ENCODE measurements at regions of chr22 and their contacts with region 1.

Region 1: DNA sequence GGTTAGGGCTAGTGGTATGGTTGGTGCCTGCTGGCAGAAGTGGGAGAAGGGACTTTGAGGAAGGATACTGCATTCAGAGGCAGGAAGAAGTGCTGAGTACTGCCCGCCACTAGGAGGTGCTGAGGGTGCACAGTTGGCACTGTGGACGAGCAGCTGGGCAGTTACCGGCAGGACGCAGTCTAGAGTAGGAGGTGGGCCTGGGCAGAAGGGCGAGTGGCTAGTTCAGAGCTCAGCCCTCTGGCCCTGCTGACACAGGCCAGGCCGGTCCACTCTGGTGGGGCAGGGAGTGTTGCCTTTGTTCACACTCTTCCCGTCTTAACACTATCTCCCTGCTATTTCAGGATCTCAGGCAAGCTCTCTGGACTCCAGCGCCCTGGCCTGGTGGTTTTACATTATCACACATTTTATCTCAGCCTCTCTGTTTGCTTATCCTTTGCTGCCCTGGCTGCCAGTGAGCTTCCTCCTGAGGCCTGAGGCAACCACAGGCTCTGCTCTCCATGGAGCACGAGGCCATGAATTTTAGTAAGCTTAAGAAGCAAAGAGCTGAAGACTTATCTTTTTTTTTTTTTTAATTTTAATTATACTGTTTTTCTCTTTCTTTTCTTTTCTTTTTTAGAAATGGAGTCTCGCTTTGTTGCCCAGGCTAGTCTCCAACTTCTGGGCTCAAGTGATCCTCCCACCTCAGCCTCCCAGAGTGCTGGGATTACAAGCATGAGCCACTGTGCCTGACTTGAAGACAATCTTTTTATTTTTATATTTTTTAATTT is 26.9 kb downstream of the SNAP29 start:
- DNase-seq: peak; percentile 82
- ATAC-seq: peak; percentile 99
- H3K4me3 ChIP-seq: no peak overlapping the region
- H3K27ac ChIP-seq: peak overlapping the region; percentile 41
- H3K4me1 ChIP-seq: peaks cover 5% of the 10 kb centered on the region
- H3K27me3 ChIP-seq: no peaks in the 10 kb centered on the region
- CTCF ChIP-seq: peak; percentile 96
- POLR2A ChIP-seq: no peak; the same call in 1 of the 2 replicates
- RAD21 ChIP-seq: peak; percentile 96

Region 2: DNA sequence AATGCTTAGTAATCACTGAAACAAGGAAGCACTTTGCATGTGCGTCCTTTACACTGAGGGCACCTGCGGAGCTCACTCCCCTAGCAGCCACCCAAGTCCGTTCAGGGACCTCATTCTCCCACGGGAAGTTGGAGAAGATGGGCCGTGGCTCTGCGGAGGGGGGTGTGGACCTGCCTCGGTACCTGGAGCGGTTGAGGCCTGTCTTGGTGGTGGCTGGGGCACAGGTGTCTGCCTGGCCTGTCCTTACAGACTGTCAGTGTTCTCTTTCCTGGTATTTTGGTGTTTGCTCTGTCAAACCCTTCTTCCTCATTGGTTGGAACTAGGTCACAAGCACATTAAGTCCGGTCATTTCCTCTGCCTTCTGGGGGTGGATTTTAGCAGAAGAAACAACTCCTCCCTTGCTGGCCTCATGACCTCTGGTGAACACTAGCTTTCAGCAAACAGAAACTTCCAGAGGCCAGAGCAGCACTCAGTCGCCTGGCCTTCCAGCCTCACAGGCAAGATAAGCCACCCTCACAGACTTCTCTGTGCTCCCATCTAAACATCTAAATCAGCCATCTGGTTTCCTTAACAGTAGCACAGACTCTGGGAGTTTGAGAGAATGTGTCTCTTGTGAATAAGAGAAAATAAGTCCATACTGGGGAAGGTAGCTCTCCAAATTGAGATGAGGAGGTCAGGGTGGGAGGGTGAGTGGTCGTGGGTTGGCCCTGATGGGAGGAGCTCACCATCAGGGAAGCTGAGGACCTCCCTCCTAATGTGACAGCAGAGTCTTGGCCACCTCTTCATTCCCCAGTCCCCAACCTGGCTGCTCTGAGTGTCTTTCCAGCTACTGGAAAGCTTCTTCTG is 18.3 kb before region 1 on chr22:
- CTCF ChIA-PET with region 1: interaction called, 14 read pairs
- POLR2A ChIA-PET with region 1: no interaction called
- dilution Hi-C with region 1: no loop called
- in situ Hi-C with region 1: no loop called
- intact Hi-C with region 1: no loop called
- DNase-seq: peak; percentile 46
- ATAC-seq: peak; percentile 76
- H3K4me3 ChIP-seq: no peak overlapping the region
- H3K27ac ChIP-seq: peak overlapping the region; percentile 88; the same call in 1 of the 2 replicates
- H3K4me1 ChIP-seq: peaks cover 25% of the 10 kb centered on the region
- H3K27me3 ChIP-seq: no peaks in the 10 kb centered on the region
- CTCF ChIP-seq: no peak
- POLR2A ChIP-seq: no peak
- RAD21 ChIP-seq: no peak

Region 3: GRCh38 chr22:20916983-20917810 is 31.5 kb after region 1 on chr22 and contains the start of gene CRKL:
- CTCF ChIA-PET with region 1: interaction called, 7 read pairs
- POLR2A ChIA-PET with region 1: no interaction called
- dilution Hi-C with region 1: no loop called
- in situ Hi-C with region 1: no loop called
- intact Hi-C with region 1: loop called (anchors 2 kb)
- DNase-seq: peak; percentile 97
- ATAC-seq: peak; percentile 99
- H3K4me3 ChIP-seq: peak within 1 kb of the TSS; percentile 87
- H3K27ac ChIP-seq: peak within 1 kb of the TSS; percentile 93
- H3K4me1 ChIP-seq: 0 out of 2 replicates have a peak, but pooled peaks cover 6% of the 10 kb centered on the region
- H3K27me3 ChIP-seq: no peaks in the 10 kb centered on the region
- CTCF ChIP-seq: peak; percentile 98
- POLR2A ChIP-seq: no peak
- RAD21 ChIP-seq: peak; percentile 62
- total RNA-seq, gene CRKL: 35.5 and 35.8 TPM in 2 replicates

Region 4: GRCh38 chr22:20957316-20958101 is 71.8 kb after region 1 on chr22:
- CTCF ChIA-PET with region 1: interaction called, 5 read pairs
- POLR2A ChIA-PET with region 1: no interaction called
- dilution Hi-C with region 1: no loop called
- in situ Hi-C with region 1: no loop called
- intact Hi-C with region 1: loop called (anchors 10 kb)
- DNase-seq: no peak
- ATAC-seq: peak; percentile 50
- H3K4me3 ChIP-seq: peak overlapping the region; percentile 51
- H3K27ac ChIP-seq: no peak overlapping the region; the same call in 1 of the 2 replicates
- H3K4me1 ChIP-seq: peaks cover 6% of the 10 kb centered on the region; the same call in 1 of the 2 replicates
- H3K27me3 ChIP-seq: no peaks in the 10 kb centered on the region
- CTCF ChIP-seq: no peak
- POLR2A ChIP-seq: no peak
- RAD21 ChIP-seq: no peak

Region 5: GRCh38 chr22:20981787-20982562 is 96.2 kb after region 1 on chr22 and contains the start of gene LZTR1:
- CTCF ChIA-PET with region 1: no interaction called
- POLR2A ChIA-PET with region 1: no interaction called
- dilution Hi-C with region 1: no loop called
- in situ Hi-C with region 1: no loop called
- intact Hi-C with region 1: loop called (anchors 2 kb)
- DNase-seq: peak; percentile 82
- ATAC-seq: peak; percentile 95
- H3K4me3 ChIP-seq: peak within 1 kb of the TSS; percentile 87
- H3K27ac ChIP-seq: peak within 1 kb of the TSS; percentile 91
- H3K4me1 ChIP-seq: peaks cover 11% of the 10 kb centered on the region
- H3K27me3 ChIP-seq: no peaks in the 10 kb centered on the region
- CTCF ChIP-seq: peak; percentile 71
- POLR2A ChIP-seq: peak; percentile 85
- RAD21 ChIP-seq: peak; percentile 64
- total RNA-seq, gene LZTR1: 19.2 and 22.8 TPM in 2 replicates

Measured in IMR-90 (cell line).